ENCODE measurements at regions of chr4 and their contacts with region 1.

Region 1: GRCh38 chr4:173328236-173328901 is 5.8 kb downstream of the HMGB2 start:
- DNase-seq: no peak
- ATAC-seq: no peak
- H3K4me3 ChIP-seq: no peak overlapping the region
- H3K27ac ChIP-seq: no peak overlapping the region
- H3K4me1 ChIP-seq: peaks cover 3% of the 10 kb centered on the region
- H3K27me3 ChIP-seq: no peaks in the 10 kb centered on the region
- CTCF ChIP-seq: no peak
- EP300 ChIP-seq: no peak
- POLR2A ChIP-seq: no peak
- RAD21 ChIP-seq: no peak

Region 2: DNA sequence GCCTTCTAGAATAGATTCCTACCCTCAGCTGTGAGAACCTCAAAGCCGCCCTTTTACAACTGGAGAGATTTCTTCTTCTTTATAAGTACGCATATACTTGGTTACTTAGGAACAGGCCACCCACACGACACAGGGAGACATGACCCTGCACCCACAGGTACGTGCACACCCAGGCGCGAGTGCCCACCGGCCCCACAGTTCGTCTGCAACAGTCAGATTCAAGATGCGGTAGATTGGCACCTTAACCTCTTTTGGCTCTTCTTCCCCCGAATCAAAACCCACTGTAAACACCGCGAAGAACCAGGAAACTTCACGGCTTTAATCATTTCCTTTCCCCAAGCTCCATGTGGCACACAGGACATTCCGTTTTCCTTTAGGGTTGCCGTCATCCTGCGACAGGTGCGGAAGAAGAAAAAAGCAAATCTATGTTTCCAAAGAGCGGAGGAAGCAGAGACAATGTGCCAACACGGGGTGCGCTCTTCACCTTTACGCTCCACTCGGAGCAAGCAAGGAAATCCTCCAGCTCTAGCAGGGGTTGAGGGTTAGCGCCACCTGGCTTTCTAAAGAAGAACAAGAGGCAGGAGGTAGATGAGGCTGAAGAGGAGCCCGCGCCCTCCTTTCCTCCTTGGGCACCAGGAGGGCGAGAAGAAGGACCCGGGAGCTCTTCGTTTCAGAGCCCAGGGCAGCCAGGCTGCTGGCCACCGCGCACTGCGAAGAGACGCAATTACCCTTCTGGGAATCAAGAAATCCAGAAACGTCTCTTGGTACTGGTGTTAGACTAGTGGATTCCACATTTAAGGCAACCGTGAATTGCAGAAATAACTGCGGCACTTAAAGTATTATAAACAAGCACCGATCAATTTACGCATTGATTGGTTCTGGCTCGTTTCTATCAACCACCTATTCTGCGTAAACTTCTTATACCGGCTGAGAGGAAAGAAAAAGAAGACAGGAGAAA is 165.9 kb after region 1 on chr4:
- CTCF ChIA-PET with region 1: no interaction called
- POLR2A ChIA-PET with region 1: no interaction called
- RAD21 ChIA-PET with region 1: no interaction called
- SMC1A ChIA-PET with region 1: no interaction called
- in situ Hi-C with region 1: loop called (anchors 5 kb)
- intact Hi-C with region 1: no loop called
- DNase-seq: peak; percentile 27
- ATAC-seq: peak; percentile 99
- H3K4me3 ChIP-seq: peak overlapping the region; percentile 70; the same call in 1 of the 2 replicates
- H3K27ac ChIP-seq: no peak overlapping the region
- H3K4me1 ChIP-seq: peaks cover 4% of the 10 kb centered on the region
- H3K27me3 ChIP-seq: no peaks in the 10 kb centered on the region
- CTCF ChIP-seq: peak; percentile 78 to 91 (median 82)
- EP300 ChIP-seq: no peak
- POLR2A ChIP-seq: no peak
- RAD21 ChIP-seq: peak; percentile 83

Region 3: GRCh38 chr4:173707658-173708419 is 379.5 kb after region 1 on chr4:
- CTCF ChIA-PET with region 1: no interaction called
- POLR2A ChIA-PET with region 1: no interaction called
- RAD21 ChIA-PET with region 1: no interaction called
- SMC1A ChIA-PET with region 1: no interaction called
- in situ Hi-C with region 1: no loop called
- intact Hi-C with region 1: no loop called
- DNase-seq: no peak
- ATAC-seq: no peak
- H3K4me3 ChIP-seq: no peak overlapping the region
- H3K27ac ChIP-seq: no peak overlapping the region
- H3K4me1 ChIP-seq: no peaks in the 10 kb centered on the region
- H3K27me3 ChIP-seq: no peaks in the 10 kb centered on the region
- CTCF ChIP-seq: no peak
- EP300 ChIP-seq: no peak
- POLR2A ChIP-seq: no peak
- RAD21 ChIP-seq: no peak

Measured in GM12878 (cell line).